ENCODE measurements at regions of chr13 and their contacts with region 1.

Region 1: GRCh38 chr13:23579072-23579895 is 9.1 kb downstream of the TNFRSF19 start:
- DNase-seq: peak; percentile 95
- ATAC-seq: peak; percentile 97
- H3K4me3 Mint-ChIP-seq: peak overlapping the region; percentile 79
- H3K27ac Mint-ChIP-seq: peak overlapping the region; percentile 41
- H3K4me1 Mint-ChIP-seq: peaks cover 11% of the 10 kb centered on the region
- H3K27me3 Mint-ChIP-seq: peaks cover 31% of the 10 kb centered on the region
- CTCF ChIP-seq: no peak

Region 2: DNA sequence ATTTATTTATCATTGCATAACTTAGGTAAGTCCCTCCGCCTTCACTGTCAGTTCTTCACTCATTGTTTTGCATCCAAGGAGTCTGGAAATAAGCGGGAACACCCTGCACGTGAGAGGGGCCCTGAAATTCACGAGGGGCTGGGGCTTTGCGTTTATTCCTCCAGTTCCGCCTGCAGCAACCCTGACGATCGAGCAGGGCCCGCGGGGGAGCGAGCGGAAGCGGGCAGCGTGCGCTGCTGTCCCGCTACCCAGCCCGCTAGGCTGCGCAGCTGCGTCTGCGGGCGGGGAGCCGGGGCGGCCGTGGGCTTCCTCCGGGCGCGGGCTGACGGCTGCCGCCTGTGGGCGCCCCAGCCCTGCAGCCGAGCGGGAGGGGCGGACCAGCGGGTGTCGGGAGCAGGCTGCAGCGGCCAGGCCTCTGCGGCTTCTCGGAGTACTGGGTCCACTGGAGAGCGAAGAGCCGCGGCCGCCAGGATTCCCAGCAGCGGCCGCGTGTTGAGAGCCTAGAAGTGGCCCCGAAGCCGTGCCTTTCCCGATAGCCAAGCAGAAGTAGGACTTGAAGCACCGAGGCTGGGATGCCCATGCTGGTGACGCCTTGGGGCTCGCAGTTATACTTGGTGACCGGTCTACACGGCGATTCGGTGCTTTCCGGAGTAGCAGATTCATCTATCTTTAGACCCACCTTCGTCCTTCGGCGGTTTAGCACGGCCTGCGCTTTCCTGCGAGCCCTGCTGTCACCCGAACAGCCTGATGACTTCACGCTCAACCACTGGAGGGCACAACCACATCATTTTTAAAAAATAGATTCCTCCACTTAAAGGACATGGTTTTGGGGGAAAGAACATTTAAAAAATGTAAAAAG is 112.9 kb before region 1 on chr13:
- CTCF ChIA-PET with region 1: interaction called, 3 read pairs
- POLR2A ChIA-PET with region 1: no interaction called
- intact Hi-C with region 1: loop called (anchors 2 kb)
- DNase-seq: peak; percentile 51
- ATAC-seq: peak; percentile 88
- H3K4me3 Mint-ChIP-seq: peak overlapping the region; percentile 79
- H3K27ac Mint-ChIP-seq: no peak overlapping the region
- H3K4me1 Mint-ChIP-seq: peaks cover 8% of the 10 kb centered on the region
- H3K27me3 Mint-ChIP-seq: peaks cover 19% of the 10 kb centered on the region
- CTCF ChIP-seq: no peak

Region 3: GRCh38 chr13:23810685-23811240 is 231.5 kb after region 1 on chr13:
- CTCF ChIA-PET with region 1: no interaction called
- POLR2A ChIA-PET with region 1: interaction called, 7 read pairs
- intact Hi-C with region 1: loop called (anchors 2 kb)
- DNase-seq: no peak
- ATAC-seq: peak; percentile 68
- H3K4me3 Mint-ChIP-seq: peak overlapping the region; percentile 20
- H3K27ac Mint-ChIP-seq: no peak overlapping the region
- H3K4me1 Mint-ChIP-seq: peaks cover 53% of the 10 kb centered on the region
- H3K27me3 Mint-ChIP-seq: no peaks in the 10 kb centered on the region
- CTCF ChIP-seq: no peak

Region 4: GRCh38 chr13:23888658-23889614 is 309.7 kb after region 1 on chr13 and contains the start of gene MIPEP:
- CTCF ChIA-PET with region 1: interaction called, 4 read pairs
- POLR2A ChIA-PET with region 1: interaction called, 4 read pairs
- intact Hi-C with region 1: loop called (anchors 1 kb)
- DNase-seq: peak; percentile 84
- ATAC-seq: peak; percentile 93
- H3K4me3 Mint-ChIP-seq: peak within 1 kb of the TSS; percentile 91
- H3K27ac Mint-ChIP-seq: peak within 1 kb of the TSS; percentile 71
- H3K4me1 Mint-ChIP-seq: peaks cover 27% of the 10 kb centered on the region
- H3K27me3 Mint-ChIP-seq: no peaks in the 10 kb centered on the region
- CTCF ChIP-seq: no peak
- total RNA-seq, gene MIPEP: 19.7 and 19.9 TPM in 2 replicates

Region 5: DNA sequence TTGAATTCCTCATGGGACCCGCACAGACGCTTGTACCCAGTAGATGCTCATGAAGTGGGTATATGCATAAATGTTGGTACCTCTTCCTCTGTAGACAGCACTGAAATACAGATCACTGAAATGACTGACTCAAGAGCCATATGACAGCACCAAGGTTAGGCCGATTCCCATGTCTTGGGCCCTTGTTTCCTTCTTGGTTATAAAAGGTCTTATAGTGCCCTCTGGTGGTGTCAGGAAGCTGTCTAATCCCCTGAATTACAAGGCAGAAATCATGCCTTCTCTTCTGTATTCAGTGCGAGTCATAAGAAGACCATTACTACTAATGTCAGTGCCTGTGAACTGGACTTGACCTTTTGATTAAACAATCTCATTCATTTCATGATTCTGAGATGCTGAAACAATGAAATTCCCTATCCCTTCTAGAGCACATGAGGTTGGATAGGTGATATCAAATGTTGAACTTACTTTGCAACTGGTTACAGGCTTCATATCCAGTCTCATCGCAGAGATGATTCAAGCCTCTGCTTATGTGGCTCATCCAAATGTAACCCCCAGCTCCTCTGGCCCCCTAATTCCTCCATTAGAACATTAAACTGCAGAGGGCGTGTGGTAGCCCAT is 640.9 kb after region 1 on chr13:
- CTCF ChIA-PET with region 1: no interaction called
- POLR2A ChIA-PET with region 1: no interaction called
- intact Hi-C with region 1: loop called (anchors 2 kb)
- DNase-seq: no peak
- ATAC-seq: peak; percentile 61
- H3K4me3 Mint-ChIP-seq: no peak overlapping the region
- H3K27ac Mint-ChIP-seq: no peak overlapping the region
- H3K4me1 Mint-ChIP-seq: peaks cover 53% of the 10 kb centered on the region
- H3K27me3 Mint-ChIP-seq: no peaks in the 10 kb centered on the region
- CTCF ChIP-seq: no peak

Region 6: GRCh38 chr13:24512197-24512907 is 933.1 kb after region 1 on chr13 and contains the start of gene PARP4:
- CTCF ChIA-PET with region 1: no interaction called
- POLR2A ChIA-PET with region 1: no interaction called
- intact Hi-C with region 1: loop called (anchors 2 kb)
- DNase-seq: peak; percentile 70
- ATAC-seq: peak; percentile 81
- H3K4me3 Mint-ChIP-seq: peak within 1 kb of the TSS; percentile 92
- H3K27ac Mint-ChIP-seq: peak within 1 kb of the TSS; percentile 88
- H3K4me1 Mint-ChIP-seq: peaks cover 24% of the 10 kb centered on the region
- H3K27me3 Mint-ChIP-seq: no peaks in the 10 kb centered on the region
- CTCF ChIP-seq: no peak
- total RNA-seq, gene PARP4: 50.0 and 56.7 TPM in 2 replicates